ENCODE measurements at regions of chr1 and their contacts with region 1.

Region 1: DNA sequence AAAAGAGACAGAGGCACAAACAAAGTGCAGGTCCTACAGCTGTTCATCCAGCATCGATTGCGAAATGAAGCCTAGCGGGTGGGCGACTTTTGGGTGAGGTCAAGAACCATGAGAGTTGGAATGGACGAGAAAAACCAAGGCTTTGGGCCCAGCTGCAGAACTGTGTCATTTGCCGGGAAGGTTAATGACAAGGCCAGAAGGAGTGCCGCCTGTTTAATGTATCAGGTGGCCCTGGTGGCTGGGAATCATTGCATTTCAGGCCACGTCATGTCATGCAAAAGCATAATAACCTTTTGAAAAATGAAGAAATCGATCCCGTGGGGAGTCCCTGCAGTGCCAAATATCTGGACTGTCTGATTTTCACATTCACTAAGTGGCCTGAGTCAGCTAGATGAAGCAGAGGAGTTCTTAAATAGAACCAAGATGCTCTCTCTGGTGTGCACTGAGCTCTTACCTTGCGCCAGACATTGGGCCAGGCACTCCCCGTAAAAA is 8.1 kb upstream of the RCC2 start:
- DNase-seq: no peak
- H3K4me3 ChIP-seq: no peak overlapping the region
- CTCF ChIP-seq: no peak
- POLR2A ChIP-seq: no peak

Region 2: GRCh38 chr1:17475729-17476128 is 28.2 kb after region 1 on chr1:
- intact Hi-C with region 1: loop called (anchors 2 kb)
- DNase-seq: no peak
- H3K4me3 ChIP-seq: no peak overlapping the region
- CTCF ChIP-seq: no peak
- POLR2A ChIP-seq: no peak

Measured in lower leg skin (tissue), 4 donors.